Aorta (tissue), 5 donors: ENCODE measurements at regions of chr9 and their contacts with region 1.

Region 1: DNA sequence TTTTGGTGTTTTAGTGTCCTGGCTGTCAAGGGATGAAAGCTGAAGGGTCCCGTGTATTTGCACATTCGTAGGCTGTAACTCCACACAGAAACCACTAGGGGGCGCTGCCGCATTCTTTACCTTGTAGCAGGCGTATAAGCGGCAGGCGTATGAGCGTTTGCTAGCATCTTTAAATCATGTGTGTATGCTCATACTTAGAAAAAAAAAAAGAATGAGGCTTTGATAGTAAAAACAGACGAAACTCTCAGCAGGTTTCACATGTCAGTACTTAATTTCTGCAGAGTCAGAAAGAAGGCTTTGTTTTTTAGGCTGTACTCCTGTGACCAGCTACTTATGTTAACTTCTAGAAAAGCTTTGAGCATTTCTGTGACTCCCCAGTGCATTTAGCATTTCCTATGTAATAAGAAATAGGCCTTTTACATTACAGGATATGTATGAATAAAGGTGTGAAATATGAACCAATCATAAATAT is 218.8 kb upstream of the ADAMTSL1 start:
- DNase-seq: peak; percentile 83 to 94
- ATAC-seq: peak; percentile 88
- H3K4me3 ChIP-seq: no peak overlapping the region
- H3K27ac ChIP-seq: no peak overlapping the region
- H3K4me1 ChIP-seq: peaks cover 0 to 4% of the 10 kb centered on the region in 2 donors
- H3K27me3 ChIP-seq: no peaks in the 10 kb centered on the region

Region 2: DNA sequence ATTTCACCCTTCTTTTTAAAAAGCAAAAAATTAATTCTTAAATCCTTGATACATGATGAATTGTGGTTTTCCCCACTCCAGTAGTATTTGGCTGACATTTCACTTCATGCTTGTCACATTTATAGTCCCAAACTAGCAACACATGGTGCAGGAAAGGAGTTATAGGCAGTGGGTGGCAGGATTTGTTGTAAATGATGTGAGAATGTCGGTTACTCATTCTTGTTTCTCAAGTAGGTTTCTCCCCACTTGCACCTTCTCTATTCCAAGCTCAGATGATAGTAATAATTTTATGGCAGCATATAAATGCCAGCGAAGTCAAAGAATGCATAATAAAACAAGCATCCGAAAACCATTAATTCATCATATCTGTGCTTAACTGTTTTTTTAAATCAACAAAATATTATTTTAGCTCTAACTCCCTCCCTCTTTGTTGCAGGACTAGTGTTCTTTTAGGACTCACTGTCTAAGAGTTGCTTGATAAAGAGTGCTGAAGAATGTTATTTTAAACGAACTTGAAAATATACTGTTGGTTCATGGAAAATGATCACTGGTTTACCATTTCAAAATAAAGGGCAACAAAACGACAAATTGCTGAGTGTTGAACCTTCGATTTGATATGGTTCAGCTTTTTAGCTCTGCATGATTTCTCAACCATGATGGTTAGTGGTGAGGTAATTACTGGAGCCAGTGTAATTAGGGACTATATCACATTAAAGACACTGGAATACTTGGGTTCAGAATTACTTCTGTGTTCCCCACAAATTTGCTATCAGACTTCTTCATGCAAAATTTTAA is 130.7 kb after region 1 on chr9:
- intact Hi-C with region 1: loop called in 1 of 2 experiments (anchors 5 kb)
- DNase-seq: no peak
- ATAC-seq: no peak
- H3K4me3 ChIP-seq: peak overlapping the region in 1 of 2 donors; percentile 18
- H3K27ac ChIP-seq: no peak overlapping the region
- H3K4me1 ChIP-seq: peaks cover 2 to 6% of the 10 kb centered on the region in 2 donors
- H3K27me3 ChIP-seq: no peaks in the 10 kb centered on the region

Region 3: DNA sequence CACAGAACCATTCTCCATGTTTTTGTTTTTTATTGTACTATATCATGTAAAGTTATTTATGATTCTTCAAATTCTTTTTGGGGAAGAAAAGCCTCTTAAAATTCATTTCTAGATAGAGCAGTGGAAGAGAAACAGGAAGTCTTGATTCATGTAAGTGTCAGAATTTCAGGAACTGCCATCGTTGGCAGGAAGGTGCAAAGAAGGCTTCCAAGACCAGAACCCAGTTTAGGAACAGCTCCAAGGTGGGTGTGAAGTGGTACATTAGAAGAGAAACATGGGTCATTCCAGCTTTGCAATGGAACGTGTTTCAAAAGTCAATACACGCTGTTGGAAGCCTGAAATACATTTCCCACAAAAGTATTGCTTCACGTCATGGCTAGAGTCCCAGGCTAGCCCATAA is 763.0 kb after region 1 on chr9:
- intact Hi-C with region 1: loop called in 1 of 2 experiments (anchors 5 kb)
- DNase-seq: no peak
- ATAC-seq: no peak
- H3K4me3 ChIP-seq: no peak overlapping the region
- H3K27ac ChIP-seq: no peak overlapping the region
- H3K4me1 ChIP-seq: peaks cover 0 to 2% of the 10 kb centered on the region in 2 donors
- H3K27me3 ChIP-seq: no peaks in the 10 kb centered on the region

Region 4: DNA sequence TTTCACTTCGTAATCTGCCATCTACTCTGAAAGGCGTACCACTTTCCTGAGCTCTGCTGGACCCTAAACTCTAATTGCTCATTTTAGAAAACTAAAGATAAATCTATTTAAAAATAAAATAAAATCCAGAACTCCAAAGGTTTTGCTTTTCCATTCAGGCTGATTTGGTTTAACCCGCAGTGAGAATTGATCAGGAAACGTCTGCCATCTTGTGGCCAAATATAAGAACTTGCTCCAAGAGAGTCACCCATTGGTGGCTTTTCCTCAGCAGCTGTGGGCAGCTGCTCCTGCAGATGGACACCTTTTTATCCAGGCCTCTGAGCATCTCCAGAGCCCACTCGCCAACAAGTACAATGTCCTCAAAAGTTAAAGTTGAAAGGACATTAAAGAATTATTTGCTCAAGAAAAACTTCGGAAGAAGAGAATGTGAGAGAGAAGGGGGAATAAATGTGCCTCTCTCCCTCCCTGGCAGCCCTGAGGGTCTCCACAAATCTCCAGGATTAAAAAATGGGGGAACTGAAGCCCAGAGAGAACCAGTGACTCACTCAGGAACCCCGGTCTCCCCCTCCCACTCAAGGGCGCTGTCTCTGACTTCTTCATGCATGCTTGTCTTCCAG is 773.7 kb after region 1 on chr9:
- intact Hi-C with region 1: loop called (anchors 5 kb)
- DNase-seq: no peak
- ATAC-seq: peak; percentile 83
- H3K4me3 ChIP-seq: no peak overlapping the region
- H3K27ac ChIP-seq: no peak overlapping the region
- H3K4me1 ChIP-seq: no peaks in the 10 kb centered on the region
- H3K27me3 ChIP-seq: no peaks in the 10 kb centered on the region